Testis (tissue), 5 donors: ENCODE measurements at regions of chr15 and their contacts with region 1.

Region 1: GRCh38 chr15:92808978-92809879 is 90.9 kb upstream of the CHD2 start:
- DNase-seq: peak; percentile 96
- H3K4me3 ChIP-seq: peak overlapping the region; percentile 70 to 84
- H3K27ac ChIP-seq: peak overlapping the region; percentile 99
- H3K4me1 ChIP-seq: peaks cover 16% of the 10 kb centered on the region
- H3K27me3 ChIP-seq: no peaks in the 10 kb centered on the region
- CTCF ChIP-seq: peak; percentile 99 to 100 (median 100)
- POLR2A ChIP-seq: peak; percentile 9

Region 2: GRCh38 chr15:92868992-92869988 is 60.1 kb after region 1 on chr15:
- intact Hi-C with region 1: no loop called
- DNase-seq: no peak
- H3K4me3 ChIP-seq: no peak overlapping the region
- H3K27ac ChIP-seq: no peak overlapping the region
- H3K4me1 ChIP-seq: no peaks in the 10 kb centered on the region
- H3K27me3 ChIP-seq: no peaks in the 10 kb centered on the region
- CTCF ChIP-seq: no peak
- POLR2A ChIP-seq: no peak

Region 3: GRCh38 chr15:92881802-92882696 is 72.8 kb after region 1 on chr15:
- intact Hi-C with region 1: loop called (anchors 2 kb)
- DNase-seq: peak; percentile 99
- H3K4me3 ChIP-seq: peak overlapping the region; percentile 92 to 98
- H3K27ac ChIP-seq: peak overlapping the region; percentile 100
- H3K4me1 ChIP-seq: peaks cover 56% of the 10 kb centered on the region
- H3K27me3 ChIP-seq: no peaks in the 10 kb centered on the region
- CTCF ChIP-seq: peak in 2 of 3 experiments; percentile 0 to 12
- POLR2A ChIP-seq: peak; percentile 95

Region 4: GRCh38 chr15:92903941-92904831 is 95.0 kb after region 1 on chr15:
- intact Hi-C with region 1: loop called (anchors 5 kb)
- DNase-seq: peak; percentile 100
- H3K4me3 ChIP-seq: peak overlapping the region; percentile 55 to 63
- H3K27ac ChIP-seq: peak overlapping the region; percentile 91 to 98
- H3K4me1 ChIP-seq: peaks cover 48% of the 10 kb centered on the region
- H3K27me3 ChIP-seq: no peaks in the 10 kb centered on the region
- CTCF ChIP-seq: peak in 1 of 3 experiments; percentile 20
- POLR2A ChIP-seq: peak; percentile 94

Region 5: DNA sequence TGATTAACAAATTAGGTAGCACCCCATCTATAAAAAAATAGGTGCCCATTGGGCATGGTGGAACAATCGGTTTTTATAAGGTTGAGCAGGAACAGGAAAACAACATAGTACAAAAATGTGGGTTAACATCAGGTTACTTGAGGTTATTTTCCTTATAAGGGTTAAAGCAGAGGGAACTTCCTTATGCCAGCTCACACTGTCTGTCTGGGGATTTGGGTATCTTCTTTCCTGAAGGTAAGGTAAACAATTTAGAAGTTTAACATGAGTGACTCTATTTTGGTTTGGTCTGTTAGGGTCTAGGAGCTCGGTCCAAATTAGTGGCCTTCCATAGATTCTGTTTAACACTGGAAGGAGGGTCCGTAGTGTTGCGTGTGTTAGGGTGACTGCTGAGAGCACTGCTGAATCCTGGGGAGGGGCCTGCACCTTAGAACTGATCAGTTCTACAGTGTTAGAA is 105.6 kb after region 1 on chr15:
- intact Hi-C with region 1: loop called (anchors 2 kb)
- DNase-seq: no peak
- H3K4me3 ChIP-seq: no peak overlapping the region
- H3K27ac ChIP-seq: peak overlapping the region in 1 of 2 donors; percentile 89
- H3K4me1 ChIP-seq: peaks cover 27% of the 10 kb centered on the region
- H3K27me3 ChIP-seq: no peaks in the 10 kb centered on the region
- CTCF ChIP-seq: no peak
- POLR2A ChIP-seq: no peak